Heart left ventricle (tissue), 16 donors: ENCODE measurements at regions of chr16 and their contacts with region 1.

Region 1: DNA sequence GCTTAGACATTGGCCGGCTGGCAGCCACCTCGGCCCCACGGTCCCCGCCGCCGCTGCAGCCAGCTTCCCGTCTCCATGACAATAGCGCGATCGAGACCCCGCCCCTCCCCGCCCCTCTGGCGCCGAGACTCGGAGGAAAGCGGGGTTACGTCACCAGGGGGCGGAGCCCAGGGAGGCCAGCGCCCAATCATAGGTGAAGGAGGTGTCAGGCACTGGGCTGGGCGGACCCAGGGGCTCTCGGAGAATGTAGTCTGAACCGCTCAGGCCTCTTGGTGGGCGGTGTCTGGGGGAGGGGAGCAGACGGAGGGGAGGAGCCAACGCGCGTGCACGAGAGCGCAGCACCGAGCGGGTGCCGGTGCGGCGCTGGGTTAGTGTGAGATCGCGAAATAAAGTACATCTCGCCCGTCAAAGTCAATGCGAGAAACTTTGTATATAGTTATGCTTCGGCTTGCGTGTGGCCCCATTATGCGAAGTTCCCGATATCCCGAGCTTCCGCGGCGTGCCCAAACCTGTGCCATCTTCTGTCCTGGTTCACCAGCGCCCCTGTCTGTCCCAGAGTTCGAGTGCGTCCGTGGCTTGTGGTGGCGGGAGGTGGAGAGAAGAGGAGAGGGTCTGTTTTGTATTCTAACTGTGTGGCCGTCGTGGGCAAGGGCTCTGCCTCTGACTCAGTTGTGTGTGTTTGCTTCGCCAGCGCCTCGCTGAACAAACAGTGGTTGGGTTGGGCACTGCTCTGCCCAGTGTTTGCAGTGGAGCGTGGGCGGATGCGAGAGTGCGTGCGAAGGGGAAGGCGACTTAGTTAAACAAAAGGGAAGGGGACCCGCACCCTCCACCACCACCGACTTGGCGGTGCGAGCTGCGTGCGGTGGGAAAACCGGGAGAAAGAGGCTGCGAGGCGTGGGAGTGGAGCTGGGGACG is 1.3 kb upstream of the IRX5 start:
- DNase-seq: peak; percentile 99 to 100 (median 100)
- ATAC-seq: peak; percentile 91 to 97 (median 93)
- H3K4me3 ChIP-seq: peak overlapping the region; percentile 60 to 86 (median 74)
- H3K27ac ChIP-seq: peak overlapping the region; percentile 79 to 96 (median 90)
- H3K4me1 ChIP-seq: peaks cover 0 to 39% (median 7%) of the 10 kb centered on the region in 12 donors
- H3K27me3 ChIP-seq: peaks cover 0 to 71% (median 26%) of the 10 kb centered on the region in 9 donors
- CTCF ChIP-seq: peak in 4 of 12 donors; percentile 23 to 47 (median 30)
- POLR2A ChIP-seq: peak; percentile 49 to 60

Region 2: GRCh38 chr16:53549970-53550690 is 1379.2 kb before region 1 on chr16:
- intact Hi-C with region 1: loop called in 1 of 10 experiments (anchors 10 kb)
- DNase-seq: peak in 4 of 5 donors; percentile 39 to 57 (median 50)
- ATAC-seq: peak; percentile 76 to 91 (median 90)
- H3K4me3 ChIP-seq: no peak overlapping the region
- H3K27ac ChIP-seq: no peak overlapping the region
- H3K4me1 ChIP-seq: peaks cover 0 to 9% (median 2%) of the 10 kb centered on the region in 12 donors
- H3K27me3 ChIP-seq: peaks cover 0 to 6% (median 0%) of the 10 kb centered on the region in 9 donors
- CTCF ChIP-seq: peak; percentile 27 to 84 (median 71)
- POLR2A ChIP-seq: no peak

Region 3: GRCh38 chr16:53945996-53946395 is 983.4 kb before region 1 on chr16:
- intact Hi-C with region 1: loop called in 3 of 10 experiments (anchors 10 kb)
- DNase-seq: no peak
- ATAC-seq: peak in 3 of 4 donors; percentile 60 to 76 (median 71)
- H3K4me3 ChIP-seq: no peak overlapping the region
- H3K27ac ChIP-seq: no peak overlapping the region
- H3K4me1 ChIP-seq: peaks cover 0 to 8% (median 0%) of the 10 kb centered on the region in 12 donors
- H3K27me3 ChIP-seq: no peaks in the 10 kb centered on the region
- CTCF ChIP-seq: peak; percentile 51 to 78 (median 72)
- POLR2A ChIP-seq: no peak

Region 4: DNA sequence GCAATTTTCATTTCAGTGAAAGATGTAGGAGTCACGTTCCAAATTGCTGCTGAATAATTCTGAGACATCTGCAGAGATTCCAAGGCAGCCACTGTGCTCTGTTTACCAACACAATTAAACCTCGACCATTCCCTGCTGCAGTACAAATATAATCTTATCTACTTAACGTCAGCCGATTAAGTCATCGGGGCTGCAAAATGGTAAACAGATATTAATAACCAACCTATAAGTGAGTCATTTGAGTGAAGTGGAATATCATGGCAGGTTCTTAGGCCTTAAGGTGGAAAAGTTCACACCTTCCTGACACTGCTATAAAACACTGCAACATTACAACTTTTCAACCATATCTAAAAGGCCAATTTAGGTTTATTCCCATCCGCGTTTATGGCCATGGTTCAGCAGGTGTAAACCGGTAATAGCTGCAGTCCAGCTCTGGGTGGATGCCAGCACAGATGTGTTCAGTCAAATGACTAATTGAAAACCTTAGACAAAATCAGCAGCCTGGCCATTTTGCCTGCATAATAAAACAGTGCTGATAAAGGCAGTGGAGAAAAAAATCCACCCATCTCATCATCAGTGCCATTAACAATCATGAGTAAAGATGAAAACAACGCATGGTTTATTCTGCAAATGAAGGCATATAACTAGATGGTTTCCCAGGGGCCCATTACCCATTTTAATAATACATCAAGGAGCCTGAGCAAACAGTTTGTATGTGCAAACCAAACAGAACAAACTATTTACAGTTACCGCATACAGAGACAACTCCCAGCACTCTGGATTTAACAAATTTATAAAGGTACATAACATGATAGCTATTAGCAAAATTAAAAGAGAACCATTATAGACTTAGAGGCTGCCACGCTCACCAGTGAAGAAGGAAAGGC is 439.9 kb before region 1 on chr16:
- intact Hi-C with region 1: loop called in 1 of 10 experiments (anchors 10 kb)
- DNase-seq: no peak
- ATAC-seq: peak; percentile 21 to 83 (median 52)
- H3K4me3 ChIP-seq: no peak overlapping the region
- H3K27ac ChIP-seq: peak overlapping the region in 9 of 12 donors; percentile 19 to 73 (median 50)
- H3K4me1 ChIP-seq: peaks cover 5 to 47% (median 19%) of the 10 kb centered on the region in 12 donors
- H3K27me3 ChIP-seq: no peaks in the 10 kb centered on the region
- CTCF ChIP-seq: no peak
- POLR2A ChIP-seq: no peak

Region 5: DNA sequence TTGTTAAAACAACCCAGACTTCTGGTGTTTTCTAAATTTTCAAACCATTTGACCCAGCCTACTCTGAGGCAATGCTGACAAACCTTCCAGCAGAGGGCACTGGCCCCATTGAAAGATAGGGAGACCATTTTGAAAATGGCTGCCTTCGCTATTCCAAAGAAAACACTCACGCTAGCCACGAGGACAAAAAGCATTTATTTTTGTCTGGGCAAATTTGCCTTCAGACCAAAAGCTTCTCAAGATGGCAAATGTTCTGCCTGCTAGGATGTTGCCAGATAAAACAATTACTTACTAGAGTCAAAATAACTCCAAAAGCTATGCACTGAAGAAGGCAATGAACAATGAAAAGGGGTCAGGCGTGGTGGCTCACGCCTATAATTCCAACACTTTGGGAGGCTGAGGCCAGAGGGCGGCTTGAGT is 295.4 kb before region 1 on chr16:
- intact Hi-C with region 1: loop called in 3 of 10 experiments (anchors 5 to 10 kb)
- DNase-seq: peak in 2 of 5 donors; percentile 29 to 38
- ATAC-seq: peak in 2 of 4 donors; percentile 33 to 62
- H3K4me3 ChIP-seq: no peak overlapping the region
- H3K27ac ChIP-seq: no peak overlapping the region
- H3K4me1 ChIP-seq: peaks cover 0 to 4% (median 0%) of the 10 kb centered on the region in 12 donors
- H3K27me3 ChIP-seq: no peaks in the 10 kb centered on the region
- CTCF ChIP-seq: peak in 11 of 12 donors; percentile 25 to 65 (median 46)
- POLR2A ChIP-seq: no peak

Region 6: GRCh38 chr16:55323637-55324490 is 394.5 kb after region 1 on chr16 and contains the start of gene IRX6:
- intact Hi-C with region 1: loop called in 4 of 10 experiments (anchors 10 kb)
- DNase-seq: peak in 4 of 5 donors; percentile 65 to 91 (median 76)
- ATAC-seq: peak; percentile 71 to 85 (median 83)
- H3K4me3 ChIP-seq: peak within 1 kb of the TSS; percentile 30 to 70 (median 58)
- H3K27ac ChIP-seq: peak within 1 kb of the TSS; percentile 50 to 98 (median 92)
- H3K4me1 ChIP-seq: peaks cover 0 to 19% (median 1%) of the 10 kb centered on the region in 12 donors
- H3K27me3 ChIP-seq: peaks cover 0 to 66% (median 32%) of the 10 kb centered on the region in 9 donors
- CTCF ChIP-seq: peak; percentile 21 to 76 (median 62)
- POLR2A ChIP-seq: no peak
- total RNA-seq, gene IRX6: 0.96 to 48.4 (median 12.4) TPM